Right ventricle myocardium inferior (tissue), 1 donor: ENCODE measurements at regions of chr20 and their contacts with region 1.

Region 1: DNA sequence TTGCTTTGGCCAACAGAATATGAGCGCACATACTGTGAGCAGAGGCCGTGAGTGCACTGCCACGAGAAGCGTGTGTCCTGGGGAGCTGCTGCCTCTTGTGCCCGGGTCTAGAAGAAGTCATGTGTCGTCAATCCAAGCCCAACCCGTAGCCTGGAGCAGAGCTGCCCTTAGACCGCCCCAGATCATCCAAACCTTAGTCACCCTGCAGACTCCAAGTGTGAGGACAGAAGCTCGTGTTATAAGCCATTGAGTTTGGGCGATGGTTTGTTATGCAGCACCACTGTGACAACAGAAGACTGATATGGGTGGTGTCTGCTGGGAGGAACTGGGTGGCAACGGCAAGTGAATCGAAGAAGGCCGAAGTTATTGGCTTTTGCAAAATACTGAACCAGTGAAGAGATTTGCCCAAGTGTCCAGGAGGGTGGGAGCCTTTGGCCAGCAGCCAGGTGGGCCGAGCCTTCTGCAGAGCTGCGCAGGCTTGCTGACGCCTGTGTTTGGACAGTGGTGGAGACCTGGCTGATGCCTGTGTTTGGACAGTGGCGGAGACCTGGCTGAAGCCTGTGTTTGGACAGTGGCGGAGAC is 101.3 kb upstream of the SULF2 start:
- DNase-seq: no peak
- ATAC-seq: no peak

Region 2: GRCh38 chr20:48523212-48523941 is 636.8 kb after region 1 on chr20:
- intact Hi-C with region 1: loop called (anchors 10 kb)
- DNase-seq: no peak
- ATAC-seq: no peak